Caco-2 (cell line): ENCODE measurements at regions of chr18 and their contacts with region 1.

Region 1: GRCh38 chr18:39966275-39966674 is 1988.8 kb upstream of the PIK3C3 start:
- DNase-seq: no peak
- H3K4me3 ChIP-seq: no peak overlapping the region
- H3K4me3 Mint-ChIP-seq: no peak overlapping the region
- H3K27ac Mint-ChIP-seq: no peak overlapping the region
- H3K4me1 ChIP-seq: no peaks in the 10 kb centered on the region
- H3K4me1 Mint-ChIP-seq: no peaks in the 10 kb centered on the region
- H3K27me3 ChIP-seq: no peaks in the 10 kb centered on the region
- H3K27me3 Mint-ChIP-seq: no peaks in the 10 kb centered on the region
- CTCF ChIP-seq: no peak

Region 2: DNA sequence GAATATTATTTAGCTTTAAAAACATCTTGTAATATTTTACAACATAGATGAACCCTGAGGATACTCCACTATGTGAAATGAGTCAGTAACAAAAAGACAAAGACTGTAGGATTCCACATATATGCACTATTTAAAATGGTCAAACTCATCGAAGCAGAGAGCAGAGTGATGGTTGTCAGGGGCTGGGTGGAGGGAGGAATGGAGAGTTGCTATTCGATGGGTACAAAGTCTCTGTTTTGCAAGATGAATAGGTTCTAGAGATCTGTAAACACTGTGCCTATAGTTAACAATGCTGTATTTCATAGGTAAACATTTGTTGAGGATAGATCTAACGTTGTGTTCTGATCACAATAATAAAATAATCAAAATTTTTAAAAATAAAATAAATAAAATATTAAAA is 724.7 kb before region 1 on chr18:
- CTCF ChIA-PET with region 1: no interaction called
- POLR2A ChIA-PET with region 1: no interaction called
- intact Hi-C with region 1: loop called (anchors 5 kb)
- DNase-seq: peak in 1 of 2 experiments; percentile 5
- H3K4me3 ChIP-seq: no peak overlapping the region
- H3K4me3 Mint-ChIP-seq: no peak overlapping the region
- H3K27ac Mint-ChIP-seq: no peak overlapping the region
- H3K4me1 ChIP-seq: no peaks in the 10 kb centered on the region
- H3K4me1 Mint-ChIP-seq: no peaks in the 10 kb centered on the region
- H3K27me3 ChIP-seq: no peaks in the 10 kb centered on the region
- H3K27me3 Mint-ChIP-seq: no peaks in the 10 kb centered on the region
- CTCF ChIP-seq: no peak

Region 3: DNA sequence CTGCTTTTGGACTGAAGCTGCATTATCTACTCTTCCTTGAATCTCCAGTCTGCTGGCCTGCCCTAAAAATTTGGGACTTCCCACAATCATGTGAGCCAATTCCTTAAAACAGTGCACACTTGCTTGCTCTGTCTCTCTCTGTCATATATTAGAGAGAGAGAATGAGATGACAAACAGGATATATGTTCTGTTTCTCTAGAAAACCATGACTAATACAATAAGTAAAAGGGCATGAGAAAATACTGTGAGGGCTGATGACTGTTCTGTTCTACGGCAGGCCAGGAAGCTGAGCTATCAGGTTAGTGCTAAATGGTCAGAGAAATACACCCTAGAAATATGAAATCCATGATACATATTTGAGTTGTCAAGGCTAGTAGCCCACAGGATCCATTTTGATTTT is 503.8 kb before region 1 on chr18:
- CTCF ChIA-PET with region 1: no interaction called
- POLR2A ChIA-PET with region 1: no interaction called
- intact Hi-C with region 1: no loop called
- DNase-seq: no peak
- H3K4me3 ChIP-seq: no peak overlapping the region
- H3K4me3 Mint-ChIP-seq: no peak overlapping the region
- H3K27ac Mint-ChIP-seq: no peak overlapping the region
- H3K4me1 ChIP-seq: no peaks in the 10 kb centered on the region
- H3K4me1 Mint-ChIP-seq: no peaks in the 10 kb centered on the region
- H3K27me3 ChIP-seq: no peaks in the 10 kb centered on the region
- H3K27me3 Mint-ChIP-seq: no peaks in the 10 kb centered on the region
- CTCF ChIP-seq: no peak

Region 4: GRCh38 chr18:39854291-39854690 is 112.0 kb before region 1 on chr18:
- CTCF ChIA-PET with region 1: no interaction called
- POLR2A ChIA-PET with region 1: no interaction called
- intact Hi-C with region 1: loop called (anchors 10 kb)
- DNase-seq: no peak
- H3K4me3 ChIP-seq: no peak overlapping the region
- H3K4me3 Mint-ChIP-seq: no peak overlapping the region
- H3K27ac Mint-ChIP-seq: no peak overlapping the region
- H3K4me1 ChIP-seq: no peaks in the 10 kb centered on the region
- H3K4me1 Mint-ChIP-seq: no peaks in the 10 kb centered on the region
- H3K27me3 ChIP-seq: no peaks in the 10 kb centered on the region
- H3K27me3 Mint-ChIP-seq: no peaks in the 10 kb centered on the region
- CTCF ChIP-seq: no peak